ENCODE measurements at regions of chr10 and their contacts with region 1.

Region 1: GRCh38 chr10:86644152-86644793 is 10.1 kb upstream of the OPN4 start:
- DNase-seq: peak; percentile 20
- ATAC-seq: peak; percentile 75
- H3K4me3 ChIP-seq: no peak overlapping the region
- H3K27ac ChIP-seq: no peak overlapping the region
- H3K4me1 ChIP-seq: peaks cover 18% of the 10 kb centered on the region
- H3K27me3 ChIP-seq: no peaks in the 10 kb centered on the region
- CTCF ChIP-seq: peak; percentile 18 to 31 (median 23); a peak in 3 of 6 replicates
- EP300 ChIP-seq: no peak
- POLR2A ChIP-seq: no peak
- RAD21 ChIP-seq: 0 out of 2 replicates have a peak, but pooled peaks have one; percentile 11

Region 2: GRCh38 chr10:86389441-86390193 is 254.7 kb before region 1 on chr10:
- CTCF ChIA-PET with region 1: interaction called, 10 read pairs
- POLR2A ChIA-PET with region 1: no interaction called
- RAD21 ChIA-PET with region 1: no interaction called
- SMC1A ChIA-PET with region 1: interaction called, 3 read pairs
- in situ Hi-C with region 1: no loop called
- intact Hi-C with region 1: no loop called
- DNase-seq: no peak
- ATAC-seq: peak; percentile 85
- H3K4me3 ChIP-seq: peak overlapping the region; percentile 87
- H3K27ac ChIP-seq: peak overlapping the region; percentile 91
- H3K4me1 ChIP-seq: peaks cover 36% of the 10 kb centered on the region
- H3K27me3 ChIP-seq: no peaks in the 10 kb centered on the region
- CTCF ChIP-seq: peak; percentile 21 to 40 (median 21); a peak in 3 of 6 replicates
- EP300 ChIP-seq: no peak
- POLR2A ChIP-seq: peak; percentile 71
- RAD21 ChIP-seq: no peak

Region 3: GRCh38 chr10:86533328-86533727 is 110.9 kb before region 1 on chr10:
- CTCF ChIA-PET with region 1: no interaction called
- POLR2A ChIA-PET with region 1: no interaction called
- RAD21 ChIA-PET with region 1: no interaction called
- SMC1A ChIA-PET with region 1: no interaction called
- in situ Hi-C with region 1: no loop called
- intact Hi-C with region 1: no loop called
- DNase-seq: no peak
- ATAC-seq: no peak
- H3K4me3 ChIP-seq: no peak overlapping the region
- H3K27ac ChIP-seq: no peak overlapping the region
- H3K4me1 ChIP-seq: peaks cover 5% of the 10 kb centered on the region
- H3K27me3 ChIP-seq: no peaks in the 10 kb centered on the region
- CTCF ChIP-seq: no peak
- EP300 ChIP-seq: no peak
- POLR2A ChIP-seq: no peak
- RAD21 ChIP-seq: no peak

Region 4: DNA sequence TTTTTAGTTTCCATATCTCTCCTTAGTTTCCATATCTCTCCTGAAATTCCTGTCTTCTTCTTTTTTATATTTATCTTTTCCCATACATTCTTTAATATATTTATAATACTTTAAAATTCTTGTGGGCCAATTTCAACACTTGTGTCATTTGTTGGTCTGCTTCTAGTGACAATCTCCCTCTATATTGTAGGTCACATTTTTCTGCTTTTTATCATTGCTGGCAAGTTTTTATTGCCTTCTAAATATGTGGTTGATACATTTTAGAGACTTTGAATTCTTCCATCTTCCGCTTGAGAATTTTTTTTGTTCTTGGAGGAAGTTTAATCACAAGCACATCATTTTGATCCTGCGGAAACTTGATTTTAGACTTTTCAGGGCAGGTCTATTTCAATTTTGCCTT is 16.0 kb before region 1 on chr10:
- CTCF ChIA-PET with region 1: interaction called, 16 read pairs
- POLR2A ChIA-PET with region 1: no interaction called
- RAD21 ChIA-PET with region 1: interaction called, 4 read pairs
- SMC1A ChIA-PET with region 1: interaction called, 4 read pairs
- in situ Hi-C with region 1: no loop called
- intact Hi-C with region 1: no loop called
- DNase-seq: no peak
- ATAC-seq: no peak
- H3K4me3 ChIP-seq: no peak overlapping the region
- H3K27ac ChIP-seq: no peak overlapping the region
- H3K4me1 ChIP-seq: no peaks in the 10 kb centered on the region
- H3K27me3 ChIP-seq: peaks cover 0 to 8% of the 10 kb centered on the region in 2 experiments; a peak in 2 of 4 replicates
- CTCF ChIP-seq: no peak
- EP300 ChIP-seq: no peak
- POLR2A ChIP-seq: no peak
- RAD21 ChIP-seq: no peak

Region 5: DNA sequence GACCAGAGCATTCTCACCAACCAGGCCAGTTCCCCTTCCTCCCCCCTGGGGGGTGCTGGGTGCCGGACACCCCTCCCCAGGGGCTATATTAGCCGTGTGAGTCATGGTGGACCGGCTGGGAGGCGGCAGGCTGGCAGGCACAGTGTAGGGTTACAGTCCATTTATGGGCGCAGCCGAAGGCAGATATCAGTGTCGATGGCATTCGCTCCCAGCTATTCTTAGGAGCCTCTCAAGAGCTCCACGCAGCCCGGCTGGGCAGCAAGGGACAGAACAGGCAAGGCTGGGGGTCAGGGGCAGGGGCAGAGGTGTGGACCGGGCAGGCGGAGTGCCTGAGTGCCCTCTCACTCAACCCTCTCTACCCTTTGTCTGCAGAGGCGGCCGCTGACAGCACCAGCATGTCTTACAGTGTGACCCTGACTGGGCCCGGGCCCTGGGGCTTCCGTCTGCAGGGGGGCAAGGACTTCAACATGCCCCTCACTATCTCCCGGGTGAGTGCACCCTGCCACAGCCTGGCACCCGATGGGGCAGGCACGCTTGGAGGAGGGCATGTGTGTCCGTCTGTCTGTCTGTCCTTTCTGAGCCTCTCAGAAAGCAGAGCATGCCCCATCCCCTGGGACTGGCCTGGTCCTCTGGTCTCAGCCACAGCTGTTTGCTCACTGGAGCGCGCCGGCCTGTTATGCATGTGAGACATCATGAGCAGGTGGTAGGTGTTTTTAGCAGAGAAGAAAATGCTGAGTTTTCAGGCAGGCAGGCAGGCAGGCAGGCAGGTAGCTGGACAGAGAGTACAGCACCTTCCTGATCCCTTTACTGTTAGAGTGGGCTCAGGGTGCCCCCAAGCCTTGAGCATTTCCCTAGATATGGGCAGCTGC is 24.3 kb after region 1 on chr10 and contains the start of gene LDB3:
- CTCF ChIA-PET with region 1: interaction called, 4 read pairs
- POLR2A ChIA-PET with region 1: interaction called, 3 read pairs
- RAD21 ChIA-PET with region 1: interaction called, 7 read pairs
- SMC1A ChIA-PET with region 1: interaction called, 13 read pairs
- in situ Hi-C with region 1: no loop called
- intact Hi-C with region 1: no loop called
- DNase-seq: peak; percentile 25
- ATAC-seq: peak; percentile 83
- H3K4me3 ChIP-seq: no peak within 1 kb of the TSS
- H3K27ac ChIP-seq: no peak within 1 kb of the TSS
- H3K4me1 ChIP-seq: no peaks in the 10 kb centered on the region
- H3K27me3 ChIP-seq: no peaks in the 10 kb centered on the region
- CTCF ChIP-seq: no peak
- EP300 ChIP-seq: 0 out of 4 replicates have a peak, but pooled peaks of 1 of the 2 experiments have one; percentile 39
- POLR2A ChIP-seq: no peak
- RAD21 ChIP-seq: no peak
- polyA plus RNA-seq, gene LDB3: 0.02 to 0.05 TPM

Region 6: GRCh38 chr10:86688398-86688921 is 44.2 kb after region 1 on chr10:
- CTCF ChIA-PET with region 1: interaction called, 17 read pairs
- POLR2A ChIA-PET with region 1: interaction called, 3 read pairs
- RAD21 ChIA-PET with region 1: interaction called, 9 read pairs
- SMC1A ChIA-PET with region 1: interaction called, 17 read pairs
- in situ Hi-C with region 1: no loop called
- intact Hi-C with region 1: no loop called
- DNase-seq: no peak
- ATAC-seq: peak; percentile 90
- H3K4me3 ChIP-seq: no peak overlapping the region
- H3K27ac ChIP-seq: no peak overlapping the region
- H3K4me1 ChIP-seq: no peaks in the 10 kb centered on the region
- H3K27me3 ChIP-seq: no peaks in the 10 kb centered on the region; a peak in 2 of 4 replicates
- CTCF ChIP-seq: peak; percentile 80 to 89 (median 81)
- EP300 ChIP-seq: no peak
- POLR2A ChIP-seq: no peak
- RAD21 ChIP-seq: peak; percentile 87